Naive thymus-derived CD4-positive, alpha-beta T cell (primary cell): ENCODE measurements at regions of chr19 and their contacts with region 1.

Region 1: GRCh38 chr19:46728693-46729676 is 12.1 kb upstream of the PRKD2 start:
- DNase-seq: peak; percentile 66 to 91 (median 82)
- ATAC-seq: peak; percentile 77
- H3K4me3 ChIP-seq: no peak overlapping the region
- H3K4me3 Mint-ChIP-seq: peak overlapping the region in 1 of 10 donors; percentile 29
- H3K27ac ChIP-seq: no peak overlapping the region
- H3K27ac Mint-ChIP-seq: peak overlapping the region in 6 of 9 donors; percentile 7 to 59 (median 28)
- H3K4me1 ChIP-seq: peaks cover 0 to 5% of the 10 kb centered on the region in 2 donors
- H3K4me1 Mint-ChIP-seq: peaks cover 8 to 32% (median 16%) of the 10 kb centered on the region in 7 donors
- H3K27me3 ChIP-seq: no peaks in the 10 kb centered on the region
- H3K27me3 Mint-ChIP-seq: no peaks in the 10 kb centered on the region

Region 2: GRCh38 chr19:46692918-46693722 is 35.9 kb before region 1 on chr19:
- CTCF ChIA-PET with region 1: interaction called, 3 read pairs
- POLR2A ChIA-PET with region 1: interaction called, 3 read pairs
- intact Hi-C with region 1: loop called (anchors 5 kb)
- DNase-seq: no peak
- ATAC-seq: no peak
- H3K4me3 ChIP-seq: no peak overlapping the region
- H3K4me3 Mint-ChIP-seq: no peak overlapping the region
- H3K27ac ChIP-seq: peak overlapping the region; percentile 34
- H3K27ac Mint-ChIP-seq: peak overlapping the region in 7 of 9 donors; percentile 47 to 78 (median 64)
- H3K4me1 ChIP-seq: no peaks in the 10 kb centered on the region
- H3K4me1 Mint-ChIP-seq: peaks cover 0 to 7% (median 0%) of the 10 kb centered on the region in 7 donors
- H3K27me3 ChIP-seq: no peaks in the 10 kb centered on the region
- H3K27me3 Mint-ChIP-seq: no peaks in the 10 kb centered on the region

Region 3: GRCh38 chr19:46803555-46803954 is 74.6 kb after region 1 on chr19:
- CTCF ChIA-PET with region 1: no interaction called
- POLR2A ChIA-PET with region 1: no interaction called
- intact Hi-C with region 1: no loop called
- DNase-seq: no peak
- ATAC-seq: no peak
- H3K4me3 ChIP-seq: no peak overlapping the region
- H3K4me3 Mint-ChIP-seq: no peak overlapping the region
- H3K27ac ChIP-seq: no peak overlapping the region
- H3K27ac Mint-ChIP-seq: no peak overlapping the region
- H3K4me1 ChIP-seq: no peaks in the 10 kb centered on the region
- H3K4me1 Mint-ChIP-seq: peaks cover 0 to 3% (median 0%) of the 10 kb centered on the region in 7 donors
- H3K27me3 ChIP-seq: no peaks in the 10 kb centered on the region
- H3K27me3 Mint-ChIP-seq: peaks cover 0 to 1% (median 0%) of the 10 kb centered on the region in 5 donors